CD4-positive, alpha-beta memory T cell (primary cell): ENCODE measurements at regions of chr6 and their contacts with region 1.

Region 1: DNA sequence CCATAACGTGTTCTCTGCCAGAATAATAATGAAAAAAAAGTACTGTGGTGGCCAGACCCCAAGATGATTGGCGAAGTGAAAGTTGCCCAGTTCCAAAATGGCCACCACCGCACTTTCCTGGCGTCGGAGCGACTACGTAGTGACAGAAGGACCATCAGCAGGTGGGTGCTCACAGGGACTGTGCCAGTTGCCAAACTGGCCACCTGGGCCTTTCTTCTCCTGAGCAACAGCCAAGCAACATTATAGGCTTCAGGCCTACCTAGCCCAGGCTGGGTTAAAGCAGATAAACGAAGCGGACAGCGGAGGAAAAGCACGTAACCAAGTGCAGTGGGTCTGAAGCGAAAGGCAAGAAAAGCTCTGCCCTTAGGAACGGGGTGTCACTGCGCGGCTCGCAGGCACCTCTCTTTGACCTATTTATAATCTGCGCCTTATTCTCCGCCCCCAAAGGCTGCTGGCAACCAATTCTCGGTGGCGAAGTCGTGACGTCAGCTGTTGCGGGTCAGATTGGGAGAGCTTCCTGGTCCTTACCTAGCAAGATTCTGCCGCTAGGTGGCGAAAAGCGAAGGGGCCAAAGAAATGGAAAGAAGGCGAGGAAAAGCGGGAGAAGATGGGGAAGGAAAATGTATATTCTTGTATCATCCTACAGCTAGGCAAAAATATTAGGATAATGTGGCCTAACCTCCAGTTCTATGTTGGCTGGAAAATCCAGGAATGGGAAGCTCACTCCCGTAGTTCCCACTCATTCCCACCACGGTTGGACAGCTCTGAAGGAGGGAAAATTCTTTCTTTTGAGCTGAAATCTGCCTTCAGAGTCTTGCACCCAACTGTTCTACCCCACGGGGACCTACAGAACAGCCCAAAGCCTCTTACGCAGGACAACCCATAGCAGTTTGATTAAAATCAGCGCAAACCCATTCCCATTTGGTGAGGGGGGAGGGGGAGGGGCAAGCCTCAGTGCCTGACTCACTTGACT is 6.9 kb upstream of the MOG start:
- DNase-seq: peak; percentile 97 to 99 (median 98)
- H3K4me3 ChIP-seq: peak overlapping the region; percentile 63 to 73
- H3K4me3 Mint-ChIP-seq: peak overlapping the region; percentile 95 to 99 (median 98)
- H3K27ac ChIP-seq: peak overlapping the region; percentile 85
- H3K27ac Mint-ChIP-seq: peak overlapping the region; percentile 96 to 100 (median 100)
- H3K4me1 ChIP-seq: peaks cover 19% of the 10 kb centered on the region
- H3K4me1 Mint-ChIP-seq: peaks cover 7 to 22% (median 14%) of the 10 kb centered on the region in 4 donors
- H3K27me3 ChIP-seq: no peaks in the 10 kb centered on the region
- H3K27me3 Mint-ChIP-seq: peaks cover 1 to 3% of the 10 kb centered on the region in 2 donors

Region 2: DNA sequence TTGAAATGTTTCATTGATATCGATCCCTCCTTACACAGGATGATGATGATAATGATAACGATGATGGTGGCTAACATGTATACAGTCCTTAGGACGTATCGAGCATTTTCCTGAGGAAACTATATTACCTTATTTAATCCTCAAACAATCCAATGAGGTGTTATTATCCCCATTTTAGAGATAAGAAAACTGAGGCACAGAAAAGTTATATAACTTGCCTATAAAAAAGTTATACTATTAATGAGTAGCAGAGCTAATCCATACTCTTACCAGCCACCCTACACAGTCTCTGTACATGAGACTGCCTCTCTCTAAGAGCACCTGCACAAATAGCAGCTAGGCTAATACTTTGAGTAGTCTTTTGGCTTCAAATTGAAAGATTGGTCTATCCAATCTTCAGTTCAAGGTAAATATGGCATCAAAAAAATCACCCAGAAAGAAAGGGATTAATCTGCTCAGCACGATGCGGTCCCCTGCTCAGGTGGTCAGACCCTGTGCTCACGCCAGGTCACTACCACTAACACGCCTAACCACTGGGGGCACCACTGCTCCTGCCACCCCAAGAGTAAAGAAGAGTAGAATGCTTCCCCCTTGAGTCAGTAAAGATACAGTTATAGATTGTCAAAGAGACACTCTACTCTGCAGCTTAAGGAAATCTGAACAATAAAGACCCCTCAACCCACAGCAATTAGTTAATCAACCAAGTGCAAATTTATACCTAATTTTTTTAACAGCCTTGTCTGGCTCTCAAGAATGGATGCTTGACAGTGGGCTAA is 32.0 kb before region 1 on chr6:
- CTCF ChIA-PET with region 1: interaction called, 336 read pairs
- POLR2A ChIA-PET with region 1: no interaction called
- intact Hi-C with region 1: no loop called
- DNase-seq: no peak
- H3K4me3 ChIP-seq: no peak overlapping the region
- H3K4me3 Mint-ChIP-seq: no peak overlapping the region
- H3K27ac ChIP-seq: no peak overlapping the region
- H3K27ac Mint-ChIP-seq: no peak overlapping the region
- H3K4me1 ChIP-seq: no peaks in the 10 kb centered on the region
- H3K4me1 Mint-ChIP-seq: no peaks in the 10 kb centered on the region
- H3K27me3 ChIP-seq: no peaks in the 10 kb centered on the region
- H3K27me3 Mint-ChIP-seq: no peaks in the 10 kb centered on the region

Region 3: DNA sequence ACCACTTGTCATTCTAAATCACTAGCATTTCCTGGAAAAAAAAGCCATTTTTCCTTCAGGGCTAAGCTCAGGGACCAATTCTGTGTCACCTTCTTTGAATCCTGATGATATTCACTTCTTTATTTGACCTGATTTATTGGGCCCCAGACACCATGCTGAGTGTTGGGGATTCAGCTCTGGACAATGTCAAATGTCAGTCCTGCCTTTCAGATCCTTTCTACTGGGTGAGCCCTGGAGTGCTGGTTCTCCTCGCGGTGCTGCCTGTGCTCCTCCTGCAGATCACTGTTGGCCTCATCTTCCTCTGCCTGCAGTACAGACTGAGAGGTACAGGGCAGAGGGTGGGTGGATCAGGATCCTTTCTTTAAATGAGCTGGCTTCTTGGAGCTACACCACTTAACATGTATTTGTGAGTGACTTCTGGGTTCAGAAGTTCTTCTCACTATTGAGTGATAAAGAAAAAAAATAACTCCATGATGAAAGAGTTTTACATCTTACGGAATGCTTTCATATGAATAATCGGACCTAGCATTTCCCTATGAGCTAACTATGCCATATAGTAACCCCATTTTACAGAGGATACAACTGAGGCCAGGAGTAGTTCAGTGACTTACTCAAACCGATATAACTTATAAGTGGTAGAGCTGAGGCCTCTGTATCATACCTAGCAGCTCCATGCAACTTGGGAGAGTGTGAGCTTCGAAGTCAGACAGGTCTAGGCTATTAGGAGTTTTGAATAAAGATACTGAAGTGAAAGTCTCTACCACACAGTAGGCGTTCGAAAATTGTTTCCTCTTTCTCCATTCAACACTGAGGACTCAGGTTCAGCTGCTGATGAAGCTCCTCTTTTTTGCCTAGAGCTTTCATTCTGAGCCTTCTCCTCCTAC is 16.2 kb after region 1 on chr6:
- CTCF ChIA-PET with region 1: interaction called, 101 read pairs
- POLR2A ChIA-PET with region 1: interaction called, 3 read pairs
- intact Hi-C with region 1: no loop called
- DNase-seq: no peak
- H3K4me3 ChIP-seq: no peak overlapping the region
- H3K4me3 Mint-ChIP-seq: no peak overlapping the region
- H3K27ac ChIP-seq: no peak overlapping the region
- H3K27ac Mint-ChIP-seq: no peak overlapping the region
- H3K4me1 ChIP-seq: no peaks in the 10 kb centered on the region
- H3K4me1 Mint-ChIP-seq: no peaks in the 10 kb centered on the region
- H3K27me3 ChIP-seq: peaks cover 3% of the 10 kb centered on the region
- H3K27me3 Mint-ChIP-seq: peaks cover 23 to 26% of the 10 kb centered on the region in 2 donors

Region 4: GRCh38 chr6:29696155-29697125 is 46.5 kb after region 1 on chr6:
- CTCF ChIA-PET with region 1: interaction called, 10 read pairs
- POLR2A ChIA-PET with region 1: interaction called, 3 read pairs
- intact Hi-C with region 1: no loop called
- DNase-seq: no peak
- H3K4me3 ChIP-seq: no peak overlapping the region
- H3K4me3 Mint-ChIP-seq: no peak overlapping the region
- H3K27ac ChIP-seq: no peak overlapping the region
- H3K27ac Mint-ChIP-seq: no peak overlapping the region
- H3K4me1 ChIP-seq: no peaks in the 10 kb centered on the region
- H3K4me1 Mint-ChIP-seq: no peaks in the 10 kb centered on the region
- H3K27me3 ChIP-seq: no peaks in the 10 kb centered on the region
- H3K27me3 Mint-ChIP-seq: peaks cover 2 to 15% of the 10 kb centered on the region in 2 donors

Region 5: DNA sequence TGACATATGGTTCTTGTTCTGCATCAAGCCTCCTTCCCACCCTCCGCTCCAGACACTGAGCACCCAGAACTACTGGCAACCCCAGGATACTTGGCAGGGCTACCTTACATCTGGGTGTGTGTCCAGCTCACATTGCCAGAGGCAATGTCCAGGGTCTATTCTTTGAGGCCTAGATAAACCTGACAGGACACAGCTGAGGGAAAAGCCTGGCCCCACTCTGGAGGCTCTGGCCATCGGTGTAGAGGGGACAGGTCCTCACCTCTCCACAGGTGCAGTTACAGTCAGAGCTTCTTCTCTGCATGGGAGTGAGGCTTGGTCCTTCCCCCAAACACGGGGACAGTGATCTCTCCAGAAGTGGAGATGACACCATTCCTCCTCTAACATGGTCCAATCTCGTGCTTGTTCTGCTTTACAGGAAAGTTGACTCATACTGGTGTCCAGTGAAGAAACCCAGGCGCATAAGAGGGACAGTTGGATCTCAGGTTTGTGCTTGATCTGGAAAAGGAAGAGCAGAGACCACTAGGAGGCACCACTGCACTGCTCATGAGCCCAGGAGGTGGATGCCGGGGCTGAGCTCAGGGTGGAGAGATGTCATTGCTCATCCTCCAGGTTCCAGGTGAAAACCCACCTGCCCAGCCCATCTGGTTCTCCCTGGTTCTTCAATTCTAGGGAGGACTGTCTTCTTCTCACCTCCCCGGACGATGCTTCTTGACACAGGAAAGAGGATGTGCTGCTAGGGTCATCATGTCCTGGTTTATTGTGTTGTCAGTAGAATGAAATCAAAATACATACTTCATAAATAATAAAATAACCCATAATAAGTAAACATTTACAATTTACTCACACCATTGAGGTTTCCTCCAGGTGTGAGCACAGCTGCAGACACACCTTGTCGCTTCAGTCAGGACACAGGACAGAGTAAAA is 88.0 kb after region 1 on chr6:
- CTCF ChIA-PET with region 1: interaction called, 15 read pairs
- POLR2A ChIA-PET with region 1: no interaction called
- intact Hi-C with region 1: no loop called
- DNase-seq: peak; percentile 68 to 78 (median 72)
- H3K4me3 ChIP-seq: no peak overlapping the region
- H3K4me3 Mint-ChIP-seq: no peak overlapping the region
- H3K27ac ChIP-seq: no peak overlapping the region
- H3K27ac Mint-ChIP-seq: peak overlapping the region in 1 of 7 donors; percentile 2
- H3K4me1 ChIP-seq: peaks cover 3% of the 10 kb centered on the region
- H3K4me1 Mint-ChIP-seq: peaks cover 5 to 18% (median 8%) of the 10 kb centered on the region in 4 donors
- H3K27me3 ChIP-seq: no peaks in the 10 kb centered on the region
- H3K27me3 Mint-ChIP-seq: no peaks in the 10 kb centered on the region

Region 6: DNA sequence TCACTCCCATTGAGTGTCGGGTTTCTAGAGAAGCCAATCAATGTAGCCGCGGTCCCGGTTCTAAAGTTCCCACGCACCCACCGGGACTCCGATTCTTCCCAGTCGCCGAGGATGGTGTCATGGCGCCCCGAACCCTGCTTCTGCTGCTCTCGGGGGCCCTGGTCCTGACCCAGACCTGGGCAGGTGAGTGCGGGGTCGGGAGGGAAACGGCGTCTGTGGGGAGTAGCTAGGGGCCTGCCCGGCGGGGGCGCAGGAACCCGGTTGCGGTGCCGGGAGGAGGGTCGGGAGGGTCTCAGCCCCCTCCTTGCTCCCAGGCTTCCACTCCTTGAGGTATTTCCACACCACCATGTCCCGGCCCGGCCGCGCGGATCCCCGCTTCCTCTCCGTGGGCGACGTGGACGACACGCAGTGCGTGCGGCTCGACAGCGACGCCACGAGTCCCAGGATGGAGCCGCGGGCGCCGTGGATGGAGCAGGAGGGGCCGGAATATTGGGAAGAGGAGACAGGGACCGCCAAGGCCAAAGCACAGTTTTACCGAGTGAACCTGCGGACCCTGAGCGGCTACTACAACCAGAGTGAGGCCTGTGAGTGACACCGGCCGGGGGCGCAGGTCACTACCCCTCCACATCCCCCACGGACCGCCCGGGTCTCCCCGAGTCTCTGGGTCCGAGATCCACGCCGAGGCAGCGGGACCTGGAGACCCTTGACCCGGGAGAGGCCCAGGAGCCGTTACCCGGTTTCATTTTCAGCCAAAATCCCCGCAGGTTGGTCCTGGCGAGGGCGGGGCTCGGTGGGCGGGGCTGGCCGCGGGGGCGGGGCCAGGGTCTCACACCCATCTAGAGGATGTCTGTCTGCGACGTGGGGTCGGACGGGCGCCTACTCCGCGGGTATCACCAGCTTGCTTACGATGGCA is 142.4 kb after region 1 on chr6:
- CTCF ChIA-PET with region 1: interaction called, 7 read pairs
- POLR2A ChIA-PET with region 1: no interaction called
- intact Hi-C with region 1: loop called (anchors 5 kb)
- DNase-seq: peak; percentile 66 to 87 (median 69)
- H3K4me3 ChIP-seq: peak overlapping the region; percentile 45 to 79
- H3K4me3 Mint-ChIP-seq: peak overlapping the region; percentile 88 to 94 (median 91)
- H3K27ac ChIP-seq: peak overlapping the region; percentile 74
- H3K27ac Mint-ChIP-seq: peak overlapping the region; percentile 68 to 92 (median 86)
- H3K4me1 ChIP-seq: peaks cover 15% of the 10 kb centered on the region
- H3K4me1 Mint-ChIP-seq: peaks cover 8 to 36% (median 18%) of the 10 kb centered on the region in 4 donors
- H3K27me3 ChIP-seq: no peaks in the 10 kb centered on the region
- H3K27me3 Mint-ChIP-seq: peaks cover 14 to 17% of the 10 kb centered on the region in 2 donors